Tibial artery (tissue), 4 donors: ENCODE measurements at regions of chr13 and their contacts with region 1.

Region 1: GRCh38 chr13:91185294-91185863 is 162.1 kb upstream of the MIR17HG start:
- DNase-seq: no peak
- H3K4me3 ChIP-seq: no peak overlapping the region
- H3K27ac ChIP-seq: no peak overlapping the region
- H3K4me1 ChIP-seq: no peaks in the 10 kb centered on the region
- H3K27me3 ChIP-seq: peaks cover 0 to 11% of the 10 kb centered on the region in 2 donors
- CTCF ChIP-seq: peak; percentile 34 to 40

Region 2: DNA sequence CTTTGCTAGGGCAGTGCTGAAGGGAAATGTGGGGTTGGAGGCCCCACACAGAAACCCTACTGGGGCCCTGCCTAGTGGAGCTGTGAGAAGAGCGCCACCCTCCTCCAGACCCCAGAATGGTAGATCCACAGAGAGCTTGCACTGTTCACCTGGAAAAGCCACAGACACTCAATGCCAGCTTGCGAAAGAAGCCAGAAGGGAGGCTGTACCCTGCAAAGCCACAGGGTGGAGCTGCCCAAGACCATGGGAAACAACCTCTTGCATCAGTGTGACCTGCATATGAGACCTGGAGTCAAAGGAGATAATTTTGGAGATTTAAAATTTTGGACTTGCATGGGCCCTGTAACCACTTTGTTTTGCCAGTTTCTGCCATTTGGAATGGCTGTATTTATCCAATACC is 453.3 kb before region 1 on chr13:
- intact Hi-C with region 1: no loop called
- DNase-seq: no peak
- H3K4me3 ChIP-seq: no peak overlapping the region
- H3K27ac ChIP-seq: no peak overlapping the region
- H3K4me1 ChIP-seq: no peaks in the 10 kb centered on the region
- H3K27me3 ChIP-seq: no peaks in the 10 kb centered on the region
- CTCF ChIP-seq: no peak

Region 3: GRCh38 chr13:91133941-91134802 is 51.2 kb before region 1 on chr13:
- intact Hi-C with region 1: loop called (anchors 10 kb)
- DNase-seq: peak in 1 of 2 donors; percentile 29
- H3K4me3 ChIP-seq: no peak overlapping the region
- H3K27ac ChIP-seq: no peak overlapping the region
- H3K4me1 ChIP-seq: peaks cover 0 to 24% (median 3%) of the 10 kb centered on the region in 4 donors
- H3K27me3 ChIP-seq: no peaks in the 10 kb centered on the region
- CTCF ChIP-seq: peak; percentile 72 to 79

Region 4: DNA sequence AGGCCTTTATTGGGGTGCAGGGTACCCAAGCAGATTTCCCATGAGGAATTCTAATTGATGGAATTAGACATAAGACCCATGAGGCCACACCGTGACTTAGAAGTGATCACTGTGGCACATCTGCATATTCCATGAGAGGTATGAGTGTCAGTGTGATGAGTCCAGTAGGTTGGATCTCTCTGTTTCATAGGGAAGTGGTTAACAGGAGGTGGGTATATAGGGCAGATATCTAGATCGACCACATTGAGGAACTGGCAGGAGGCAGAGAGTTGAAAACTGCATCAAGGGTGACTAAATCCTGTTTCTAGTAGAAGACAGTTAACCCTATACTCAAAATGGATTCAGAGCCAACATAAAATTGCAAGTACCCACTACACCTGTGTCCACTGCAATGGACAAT is 93.5 kb after region 1 on chr13:
- intact Hi-C with region 1: no loop called
- DNase-seq: no peak
- H3K4me3 ChIP-seq: no peak overlapping the region
- H3K27ac ChIP-seq: no peak overlapping the region
- H3K4me1 ChIP-seq: no peaks in the 10 kb centered on the region
- H3K27me3 ChIP-seq: no peaks in the 10 kb centered on the region
- CTCF ChIP-seq: no peak

Region 5: GRCh38 chr13:91369441-91369831 is 184.1 kb after region 1 on chr13:
- intact Hi-C with region 1: no loop called
- DNase-seq: no peak
- H3K4me3 ChIP-seq: no peak overlapping the region
- H3K27ac ChIP-seq: no peak overlapping the region
- H3K4me1 ChIP-seq: no peaks in the 10 kb centered on the region
- H3K27me3 ChIP-seq: no peaks in the 10 kb centered on the region
- CTCF ChIP-seq: no peak